ENCODE measurements at regions of chr1 and their contacts with region 1.

Region 1: GRCh38 chr1:203216274-203217138 is 13.0 kb downstream of the CHIT1 start:
- DNase-seq: no peak
- H3K4me3 ChIP-seq: no peak overlapping the region
- H3K27ac ChIP-seq: no peak overlapping the region
- H3K4me1 ChIP-seq: peaks cover 0 to 8% of the 10 kb centered on the region in 2 donors
- H3K27me3 ChIP-seq: no peaks in the 10 kb centered on the region
- CTCF ChIP-seq: peak; percentile 51 to 81 (median 77)
- POLR2A ChIP-seq: no peak

Region 2: GRCh38 chr1:203127666-203128430 is 88.7 kb before region 1 on chr1 and contains the start of gene ADORA1:
- intact Hi-C with region 1: loop called (anchors 5 kb)
- DNase-seq: peak; percentile 51 to 65
- H3K4me3 ChIP-seq: peak within 1 kb of the TSS; percentile 12 to 63 (median 55)
- H3K27ac ChIP-seq: peak within 1 kb of the TSS; percentile 70 to 77
- H3K4me1 ChIP-seq: peaks cover 4 to 13% of the 10 kb centered on the region in 2 donors
- H3K27me3 ChIP-seq: no peaks in the 10 kb centered on the region
- CTCF ChIP-seq: no peak
- POLR2A ChIP-seq: no peak
- total RNA-seq, gene ADORA1: 0.64 to 14.5 (median 5.2) TPM

Region 3: DNA sequence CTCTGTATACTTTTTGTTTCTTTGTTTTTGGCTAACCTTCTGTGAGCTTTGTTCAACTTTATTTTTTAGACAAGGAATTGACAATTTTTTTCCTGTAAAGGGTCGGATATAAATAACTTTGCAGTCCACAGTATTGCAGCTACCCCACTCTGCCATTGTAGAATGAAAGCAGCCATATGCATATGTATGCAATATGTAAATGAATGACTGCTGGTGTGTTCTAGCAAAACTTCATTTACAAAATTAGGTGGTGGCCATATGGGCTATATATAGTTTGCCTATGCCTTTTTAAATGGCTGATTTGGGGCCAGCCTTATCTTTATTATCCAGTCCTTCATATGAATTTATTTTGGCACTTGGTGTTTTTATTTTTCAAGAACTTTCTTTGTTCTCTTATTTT is 626.9 kb after region 1 on chr1:
- intact Hi-C with region 1: loop called (anchors 5 kb)
- DNase-seq: no peak
- H3K4me3 ChIP-seq: no peak overlapping the region
- H3K27ac ChIP-seq: no peak overlapping the region
- H3K4me1 ChIP-seq: no peaks in the 10 kb centered on the region
- H3K27me3 ChIP-seq: no peaks in the 10 kb centered on the region
- CTCF ChIP-seq: no peak
- POLR2A ChIP-seq: no peak